Astrocyte of the cerebellum (primary cell): ENCODE measurements at regions of chr20 and their contacts with region 1.

Region 1: DNA sequence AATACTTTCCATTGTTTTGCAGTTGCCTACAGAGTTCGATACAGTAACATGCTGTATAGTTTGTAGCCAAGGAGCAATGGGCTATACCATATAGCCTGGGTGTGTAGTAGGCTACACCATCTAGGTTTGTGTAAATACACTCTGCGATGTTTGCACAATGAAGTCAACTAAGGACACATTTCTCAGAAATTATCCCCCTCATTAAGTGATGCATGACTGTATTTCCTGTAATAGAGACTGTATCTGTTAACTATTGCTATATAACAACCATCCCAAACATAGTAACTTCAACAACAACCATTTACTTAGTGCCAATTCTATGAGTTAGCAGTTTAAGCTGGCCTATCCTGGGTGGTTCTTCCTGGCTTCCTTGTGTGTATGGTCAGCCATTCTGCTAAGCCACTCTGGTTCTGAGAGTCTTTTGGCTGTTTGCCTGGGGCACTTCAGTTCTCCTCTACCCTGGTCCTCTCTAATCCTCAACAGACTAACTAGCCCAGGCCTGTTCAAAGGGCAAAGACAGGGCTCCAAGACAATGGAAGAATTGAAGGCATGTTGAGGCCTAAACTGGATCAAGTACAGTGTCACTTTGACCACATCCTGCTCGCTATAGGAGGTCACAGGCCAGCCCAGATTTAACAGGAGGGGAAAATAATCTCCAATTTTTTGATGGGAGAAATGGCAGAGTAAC is 124.0 kb downstream of the PLCB1 start:
- DNase-seq: no peak
- H3K4me3 ChIP-seq: no peak overlapping the region
- CTCF ChIP-seq: no peak

Region 2: DNA sequence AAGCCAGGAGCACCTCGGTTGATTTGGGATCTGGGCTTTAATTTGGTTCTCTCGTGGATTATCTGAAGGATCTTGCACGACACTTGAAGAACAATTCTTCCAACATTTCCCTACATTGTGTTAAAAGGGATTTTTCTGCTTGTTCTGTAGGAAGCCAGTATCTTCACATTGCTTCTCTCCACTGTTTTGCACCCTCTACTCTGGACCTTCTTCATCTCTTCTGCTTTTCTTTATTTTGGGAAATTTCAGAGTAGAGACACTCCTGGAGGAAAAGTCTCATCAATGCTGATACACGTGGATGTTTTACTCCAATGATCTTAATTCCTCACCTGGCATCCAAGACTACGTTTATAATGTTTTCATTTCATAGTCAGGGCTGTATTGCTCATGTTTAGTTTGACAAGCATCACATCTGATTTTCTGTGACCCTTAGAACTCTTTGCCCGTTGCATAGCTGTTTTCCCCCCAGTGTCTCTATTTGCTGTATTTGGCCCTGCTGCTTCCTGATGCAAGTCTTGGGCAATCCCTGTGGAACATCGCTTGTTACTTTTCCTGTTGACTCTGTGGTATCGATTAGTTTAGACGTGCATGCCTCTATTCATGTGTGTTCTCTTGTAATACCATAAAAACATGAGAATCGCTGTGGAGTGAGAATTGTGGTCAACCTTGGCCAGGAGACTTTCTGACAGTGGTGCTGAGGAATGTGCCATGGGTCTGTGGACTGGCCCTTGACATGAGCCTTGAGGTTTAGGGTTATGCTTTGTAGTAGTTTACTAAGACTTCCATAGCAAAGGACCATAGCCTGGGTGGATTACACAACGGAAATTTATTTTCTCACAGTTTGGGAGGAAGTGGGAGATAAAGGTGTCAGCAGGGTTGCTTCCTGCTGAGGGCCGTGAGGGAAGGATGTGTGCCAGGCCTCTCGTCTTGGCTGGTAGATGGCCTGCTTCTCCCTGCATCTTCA is 111.5 kb before region 1 on chr20:
- in situ Hi-C with region 1: no loop called
- DNase-seq: peak; percentile 96
- H3K4me3 ChIP-seq: no peak overlapping the region
- CTCF ChIP-seq: no peak

Region 3: GRCh38 chr20:8291873-8292272 is 35.8 kb after region 1 on chr20:
- in situ Hi-C with region 1: loop called (anchors 5 kb)
- DNase-seq: peak; percentile 48
- H3K4me3 ChIP-seq: no peak overlapping the region
- CTCF ChIP-seq: no peak

Region 4: GRCh38 chr20:8309634-8310033 is 53.5 kb after region 1 on chr20:
- in situ Hi-C with region 1: no loop called
- DNase-seq: no peak
- H3K4me3 ChIP-seq: no peak overlapping the region
- CTCF ChIP-seq: no peak

Region 5: GRCh38 chr20:8489094-8489883 is 233.2 kb after region 1 on chr20:
- in situ Hi-C with region 1: no loop called
- DNase-seq: no peak
- H3K4me3 ChIP-seq: no peak overlapping the region
- CTCF ChIP-seq: no peak